ENCODE measurements at regions of chr2 and their contacts with region 1.

Region 1: DNA sequence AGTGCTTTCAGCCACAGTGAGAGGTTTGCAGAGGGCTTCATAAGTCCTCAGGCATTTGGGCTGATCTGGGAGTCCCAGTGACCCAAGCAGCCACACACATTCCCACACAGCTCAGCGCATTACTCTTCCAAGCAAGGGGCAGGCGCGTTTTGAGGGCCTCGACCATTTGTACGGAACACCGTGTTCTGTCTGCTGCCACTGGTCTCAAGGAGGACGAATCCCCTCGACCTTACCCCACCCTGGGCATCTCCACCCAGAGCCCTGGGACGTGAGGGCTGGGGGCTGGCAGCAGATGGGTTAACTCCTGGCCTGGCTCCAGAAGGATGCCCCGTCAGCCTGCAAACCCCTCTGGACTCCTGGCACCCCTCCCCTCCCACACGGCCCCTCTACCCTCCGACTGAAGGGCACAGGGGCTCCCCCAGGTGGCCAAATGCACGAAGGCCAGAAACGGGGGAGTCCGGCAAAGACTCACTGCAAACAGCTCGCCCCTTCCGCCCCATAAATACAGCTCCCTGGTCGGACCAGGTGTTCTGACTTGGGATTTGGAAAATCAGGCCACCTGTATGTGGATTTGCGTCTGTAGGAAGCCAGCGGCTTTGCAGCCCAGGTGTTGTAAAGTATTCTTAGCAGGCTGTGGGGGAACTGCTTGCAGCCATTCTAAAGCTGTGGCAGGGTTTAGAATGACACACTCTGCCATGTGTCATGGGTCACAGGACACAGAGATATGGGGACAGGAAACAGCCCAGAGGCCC is 33.6 kb upstream of the PTMA start:
- DNase-seq: peak; percentile 89
- ATAC-seq: peak; percentile 63
- H3K4me3 ChIP-seq: no peak overlapping the region
- H3K27ac ChIP-seq: peak overlapping the region; percentile 89
- H3K4me1 ChIP-seq: peaks cover 47% of the 10 kb centered on the region
- H3K27me3 ChIP-seq: no peaks in the 10 kb centered on the region
- CTCF ChIP-seq: peak; percentile 84

Region 2: GRCh38 chr2:231530091-231531011 is 144.4 kb before region 1 on chr2 and contains the start of gene NMUR1:
- intact Hi-C with region 1: no loop called
- DNase-seq: peak; percentile 83
- ATAC-seq: peak; percentile 89
- H3K4me3 ChIP-seq: peak within 1 kb of the TSS; percentile 55
- H3K27ac ChIP-seq: peak within 1 kb of the TSS; percentile 58
- H3K4me1 ChIP-seq: peaks cover 4% of the 10 kb centered on the region
- H3K27me3 ChIP-seq: peaks cover 5% of the 10 kb centered on the region
- CTCF ChIP-seq: peak; percentile 71
- total RNA-seq, gene NMUR1: 5.8 TPM

Region 3: GRCh38 chr2:231612179-231613053 is 62.3 kb before region 1 on chr2:
- intact Hi-C with region 1: loop called (anchors 5 kb)
- DNase-seq: peak; percentile 96
- ATAC-seq: peak; percentile 86
- H3K4me3 ChIP-seq: no peak overlapping the region
- H3K27ac ChIP-seq: peak overlapping the region; percentile 96
- H3K4me1 ChIP-seq: peaks cover 33% of the 10 kb centered on the region
- H3K27me3 ChIP-seq: no peaks in the 10 kb centered on the region
- CTCF ChIP-seq: peak; percentile 99

Measured in upper lobe of right lung (tissue), 1 donor.